ENCODE measurements at regions of chr15 and their contacts with region 1.

Region 1: GRCh38 chr15:50315814-50316630 is 39.0 kb downstream of the GABPB1 start:
- DNase-seq: peak; percentile 52
- H3K4me3 ChIP-seq: no peak overlapping the region
- H3K27ac ChIP-seq: no peak overlapping the region
- H3K4me1 ChIP-seq: no peaks in the 10 kb centered on the region
- H3K27me3 ChIP-seq: no peaks in the 10 kb centered on the region
- CTCF ChIP-seq: peak; percentile 32 to 39
- POLR2A ChIP-seq: no peak

Region 2: GRCh38 chr15:50287324-50288116 is 28.5 kb before region 1 on chr15:
- CTCF ChIA-PET with region 1: interaction called, 15 read pairs
- POLR2A ChIA-PET with region 1: no interaction called
- dilution Hi-C with region 1: no loop called
- intact Hi-C with region 1: no loop called
- DNase-seq: no peak
- H3K4me3 ChIP-seq: no peak overlapping the region
- H3K27ac ChIP-seq: no peak overlapping the region
- H3K4me1 ChIP-seq: no peaks in the 10 kb centered on the region
- H3K27me3 ChIP-seq: no peaks in the 10 kb centered on the region
- CTCF ChIP-seq: no peak
- POLR2A ChIP-seq: no peak

Region 3: GRCh38 chr15:50302581-50302980 is 13.4 kb before region 1 on chr15:
- CTCF ChIA-PET with region 1: interaction called, 17 read pairs
- POLR2A ChIA-PET with region 1: no interaction called
- dilution Hi-C with region 1: no loop called
- intact Hi-C with region 1: no loop called
- DNase-seq: no peak
- H3K4me3 ChIP-seq: no peak overlapping the region
- H3K27ac ChIP-seq: no peak overlapping the region
- H3K4me1 ChIP-seq: no peaks in the 10 kb centered on the region
- H3K27me3 ChIP-seq: no peaks in the 10 kb centered on the region
- CTCF ChIP-seq: no peak
- POLR2A ChIP-seq: no peak

Region 4: GRCh38 chr15:50330921-50331320 is 14.9 kb after region 1 on chr15:
- CTCF ChIA-PET with region 1: interaction called, 13 read pairs
- POLR2A ChIA-PET with region 1: no interaction called
- dilution Hi-C with region 1: no loop called
- intact Hi-C with region 1: no loop called
- DNase-seq: no peak
- H3K4me3 ChIP-seq: no peak overlapping the region
- H3K27ac ChIP-seq: no peak overlapping the region
- H3K4me1 ChIP-seq: no peaks in the 10 kb centered on the region
- H3K27me3 ChIP-seq: no peaks in the 10 kb centered on the region
- CTCF ChIP-seq: no peak
- POLR2A ChIP-seq: no peak

Region 5: GRCh38 chr15:50344006-50344464 is 28.0 kb after region 1 on chr15:
- CTCF ChIA-PET with region 1: interaction called, 15 read pairs
- POLR2A ChIA-PET with region 1: no interaction called
- dilution Hi-C with region 1: no loop called
- intact Hi-C with region 1: no loop called
- DNase-seq: no peak
- H3K4me3 ChIP-seq: no peak overlapping the region
- H3K27ac ChIP-seq: no peak overlapping the region
- H3K4me1 ChIP-seq: peaks cover 3% of the 10 kb centered on the region
- H3K27me3 ChIP-seq: no peaks in the 10 kb centered on the region
- CTCF ChIP-seq: no peak
- POLR2A ChIP-seq: no peak

Measured in endothelial cell of umbilical vein (primary cell).